Right lobe of liver (tissue), 6 donors: ENCODE measurements at regions of chr4 and their contacts with region 1.

Region 1: DNA sequence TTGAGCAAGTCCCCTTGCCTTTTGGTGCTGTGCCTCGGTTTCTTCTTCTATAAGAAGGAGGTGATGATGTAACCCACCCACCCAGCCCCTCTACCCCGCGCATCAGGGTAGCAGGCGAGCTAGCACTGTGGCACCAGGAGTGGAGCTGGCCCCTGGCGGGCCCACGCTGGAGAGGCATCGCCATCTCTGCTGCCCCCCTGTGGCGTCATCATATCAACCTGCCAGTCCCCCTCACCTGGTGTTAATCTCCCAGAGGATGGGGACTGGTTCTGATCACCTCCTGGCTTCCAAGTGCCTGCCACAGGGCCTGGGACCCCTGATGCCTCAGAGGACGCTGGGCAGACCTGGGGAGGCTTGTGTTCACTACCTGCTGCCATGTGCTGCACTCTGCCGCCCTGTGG is 6.3 kb upstream of the SORCS2 start:
- DNase-seq: peak in 1 of 3 donors; percentile 46
- ATAC-seq: peak; percentile 64 to 78 (median 68)
- H3K4me3 ChIP-seq: no peak overlapping the region
- H3K27ac ChIP-seq: no peak overlapping the region
- H3K4me1 ChIP-seq: no peaks in the 10 kb centered on the region
- H3K27me3 ChIP-seq: no peaks in the 10 kb centered on the region
- CTCF ChIP-seq: peak; percentile 26 to 39 (median 34)
- POLR2A ChIP-seq: no peak

Region 2: DNA sequence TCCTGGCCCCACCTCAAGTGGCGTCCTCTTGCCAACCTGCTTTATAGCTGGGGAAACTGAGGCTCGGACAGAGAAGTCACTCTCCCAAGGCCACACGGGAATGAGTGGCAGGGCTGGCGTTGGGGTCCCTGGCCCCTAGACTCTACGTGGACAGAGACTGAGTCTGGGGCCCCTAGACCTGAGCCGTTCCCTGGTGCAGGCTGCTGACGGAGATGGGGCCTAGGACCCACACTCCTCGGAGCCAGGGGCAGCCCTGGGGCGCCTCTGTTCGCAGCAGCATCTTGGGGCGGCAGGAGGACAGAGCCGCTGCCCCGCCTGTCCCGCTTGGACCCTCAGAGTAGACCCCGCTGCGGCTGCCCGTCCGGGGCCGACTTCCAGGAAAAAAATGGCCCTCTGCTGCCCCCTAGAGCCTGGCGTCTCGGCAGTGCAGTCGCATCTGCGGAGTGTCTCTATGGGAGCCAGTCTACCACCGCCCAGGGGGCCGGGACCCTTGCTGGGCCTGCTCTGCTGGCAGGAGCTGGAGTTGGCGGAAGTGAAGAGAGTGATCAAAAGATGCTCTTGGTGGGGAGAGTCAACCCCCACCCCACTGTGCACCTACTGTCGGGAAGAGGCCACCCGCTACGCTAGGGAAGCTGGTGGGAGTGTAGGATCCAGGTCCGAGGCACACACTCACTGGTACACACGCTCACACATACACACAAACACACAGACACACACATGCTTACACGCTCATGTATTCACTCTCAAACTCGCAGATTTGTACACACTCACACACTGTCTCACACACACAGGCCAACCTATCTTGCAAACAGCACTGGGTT is 533.5 kb after region 1 on chr4:
- intact Hi-C with region 1: loop called (anchors 5 to 10 kb)
- DNase-seq: peak in 2 of 3 donors; percentile 68 to 71
- ATAC-seq: peak; percentile 67 to 82 (median 78)
- H3K4me3 ChIP-seq: no peak overlapping the region
- H3K27ac ChIP-seq: no peak overlapping the region
- H3K4me1 ChIP-seq: no peaks in the 10 kb centered on the region
- H3K27me3 ChIP-seq: no peaks in the 10 kb centered on the region
- CTCF ChIP-seq: peak; percentile 81 to 92 (median 86)
- POLR2A ChIP-seq: no peak